GM10248 (cell line): ENCODE measurements at regions of chr18 and their contacts with region 1.

Region 1: DNA sequence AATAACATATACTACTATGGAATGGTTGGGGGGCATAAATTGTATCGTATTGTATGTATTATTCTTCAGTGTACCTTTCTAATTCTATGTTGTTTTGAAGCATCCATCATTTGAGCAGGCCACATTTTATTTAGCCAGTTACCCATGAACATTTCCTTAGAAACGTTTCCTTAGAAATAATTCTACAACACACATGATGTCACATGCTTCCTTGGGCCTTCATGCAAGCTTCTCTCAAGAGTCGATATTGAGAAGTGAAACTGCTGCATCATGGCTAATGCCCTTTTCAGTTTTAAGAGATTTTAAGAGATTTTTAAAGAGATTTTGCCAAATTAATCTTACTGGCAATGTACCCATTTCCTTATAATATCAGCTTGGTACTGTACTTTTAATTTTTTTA is 63.9 kb downstream of the ALPK2 start:
- DNase-seq: peak; percentile 61
- CTCF ChIP-seq: no peak

Region 2: GRCh38 chr18:58552057-58552461 is 13.0 kb before region 1 on chr18:
- CTCF ChIA-PET with region 1: interaction called, 16 read pairs
- POLR2A ChIA-PET with region 1: no interaction called
- DNase-seq: peak; percentile 58
- CTCF ChIP-seq: no peak